ENCODE measurements at regions of chr17 and their contacts with region 1.

Region 1: DNA sequence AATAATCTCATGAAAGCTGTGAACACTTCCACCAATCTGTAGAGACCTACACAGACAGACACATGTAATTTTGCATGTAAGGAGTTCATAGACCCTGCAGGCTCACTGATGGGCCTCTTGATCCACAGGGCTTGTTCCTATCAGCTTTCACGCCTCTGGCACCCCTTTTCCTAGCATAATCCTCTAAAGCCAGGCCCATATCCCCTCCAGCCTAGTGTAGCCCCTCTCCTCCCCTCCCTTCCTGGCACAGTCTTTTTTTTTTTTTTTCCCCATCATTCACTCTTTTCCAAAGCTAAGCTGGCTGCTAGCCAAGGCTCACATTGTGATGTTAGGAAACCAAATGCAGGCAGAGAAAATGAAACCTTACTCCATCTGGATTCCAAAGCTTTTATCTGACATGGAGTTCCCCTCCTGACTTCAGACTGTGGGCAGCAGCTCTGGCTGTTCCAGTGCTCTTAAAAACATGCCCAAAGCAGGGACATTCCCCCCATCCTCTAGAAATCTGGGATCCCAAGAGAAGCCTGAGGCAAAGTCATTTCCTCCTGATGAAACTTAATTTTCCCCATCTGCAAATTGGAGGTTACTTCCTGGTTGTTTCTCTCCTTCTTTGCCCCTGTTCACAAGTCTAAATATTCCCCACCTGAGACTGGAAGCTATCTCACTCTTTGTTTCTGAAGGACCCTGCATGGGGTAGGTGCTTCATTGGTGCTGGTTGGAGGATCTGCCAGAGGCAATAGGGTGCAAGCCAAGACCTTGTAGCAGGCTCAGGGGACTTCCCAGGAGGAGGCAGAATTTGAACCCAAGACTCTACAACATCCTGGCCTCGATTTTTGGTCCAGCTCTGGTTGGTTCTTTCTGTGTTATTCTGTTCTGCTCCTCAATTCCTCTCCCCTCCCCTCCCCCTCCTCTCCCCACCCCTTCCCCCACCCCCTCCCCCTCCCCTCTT is 9.9 kb upstream of the CCL5 start:
- DNase-seq: no peak
- H3K4me3 ChIP-seq: no peak overlapping the region
- H3K27ac ChIP-seq: no peak overlapping the region
- H3K4me1 ChIP-seq: no peaks in the 10 kb centered on the region
- H3K27me3 ChIP-seq: no peaks in the 10 kb centered on the region
- CTCF ChIP-seq: no peak
- POLR2A ChIP-seq: no peak

Region 2: GRCh38 chr17:35498448-35499178 is 391.5 kb before region 1 on chr17:
- intact Hi-C with region 1: loop called (anchors 5 kb)
- DNase-seq: no peak
- H3K4me3 ChIP-seq: peak overlapping the region in 2 of 3 donors; percentile 15 to 51
- H3K27ac ChIP-seq: no peak overlapping the region
- H3K4me1 ChIP-seq: no peaks in the 10 kb centered on the region
- H3K27me3 ChIP-seq: peaks cover 0 to 44% of the 10 kb centered on the region in 2 donors
- CTCF ChIP-seq: no peak
- POLR2A ChIP-seq: no peak

Region 3: GRCh38 chr17:35953720-35954119 is 63.6 kb after region 1 on chr17:
- intact Hi-C with region 1: loop called (anchors 2 kb)
- DNase-seq: no peak
- H3K4me3 ChIP-seq: no peak overlapping the region
- H3K27ac ChIP-seq: no peak overlapping the region
- H3K4me1 ChIP-seq: no peaks in the 10 kb centered on the region
- H3K27me3 ChIP-seq: peaks cover 0 to 4% of the 10 kb centered on the region in 2 donors
- CTCF ChIP-seq: no peak
- POLR2A ChIP-seq: no peak

Measured in breast epithelium (tissue), 4 donors.